Adrenal gland (tissue), 19 donors: ENCODE measurements at regions of chr10 and their contacts with region 1.

Region 1: GRCh38 chr10:101297901-101298486 is 56.0 kb upstream of the BTRC start:
- DNase-seq: peak; percentile 43 to 82 (median 65)
- H3K4me3 ChIP-seq: no peak overlapping the region
- H3K27ac ChIP-seq: no peak overlapping the region
- H3K4me1 ChIP-seq: no peaks in the 10 kb centered on the region
- H3K27me3 ChIP-seq: no peaks in the 10 kb centered on the region
- CTCF ChIP-seq: peak; percentile 55 to 88 (median 72)
- POLR2A ChIP-seq: no peak

Region 2: GRCh38 chr10:101441541-101442455 is 143.8 kb after region 1 on chr10:
- intact Hi-C with region 1: loop called in 1 of 2 experiments (anchors 10 kb)
- DNase-seq: peak in 6 of 7 donors; percentile 19 to 62 (median 36)
- H3K4me3 ChIP-seq: no peak overlapping the region
- H3K27ac ChIP-seq: no peak overlapping the region
- H3K4me1 ChIP-seq: peaks cover 2 to 6% of the 10 kb centered on the region in 2 donors
- H3K27me3 ChIP-seq: no peaks in the 10 kb centered on the region
- CTCF ChIP-seq: peak; percentile 23 to 82 (median 56)
- POLR2A ChIP-seq: no peak